ENCODE measurements at regions of chr12 and their contacts with region 1.

Region 1: DNA sequence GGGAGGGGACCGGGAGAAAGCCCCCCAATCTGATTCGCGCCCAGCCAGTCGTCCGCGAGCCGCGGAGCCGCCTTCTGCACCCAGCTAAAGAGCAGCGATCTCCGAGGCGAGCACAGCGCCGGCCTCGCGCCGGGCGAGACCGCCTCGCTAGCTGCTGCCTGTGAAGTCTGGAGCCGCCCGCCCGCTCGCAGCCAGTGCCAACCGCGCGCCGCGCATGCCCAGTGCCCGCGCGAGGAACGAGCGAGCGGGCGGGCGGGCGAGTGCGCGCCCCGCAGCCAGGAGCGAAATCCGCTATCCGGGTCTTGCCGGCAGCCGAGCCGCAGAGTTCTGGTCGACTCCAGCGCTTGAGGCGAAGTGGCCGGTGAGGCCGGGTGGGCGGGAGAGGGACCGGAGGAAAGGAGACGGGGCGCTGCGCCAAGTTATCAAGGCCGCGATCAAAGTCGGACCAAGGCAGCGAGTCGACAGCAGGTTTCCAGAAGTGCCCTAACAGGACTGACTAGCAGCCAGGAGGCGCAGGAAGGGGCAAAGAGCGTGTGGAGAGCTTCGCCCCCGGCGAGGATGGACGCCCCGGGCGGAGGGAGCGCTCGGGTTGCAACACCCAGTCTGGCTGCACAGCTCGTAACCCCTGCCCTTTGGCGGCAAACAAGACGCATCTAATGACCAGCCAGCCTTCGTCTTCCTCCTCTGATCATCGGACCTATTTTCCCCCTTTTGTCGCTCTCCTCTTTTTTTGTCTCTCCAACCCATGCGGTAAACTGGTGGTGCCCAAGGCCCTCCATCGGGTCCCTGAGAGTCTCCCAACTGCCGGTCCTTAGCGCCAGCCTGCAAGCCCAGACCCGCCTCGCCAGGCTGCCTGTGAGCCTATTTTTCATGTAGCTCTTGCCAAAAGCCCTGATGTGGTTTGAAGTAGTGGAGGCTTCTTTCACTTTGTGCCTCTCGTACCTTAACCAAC is at the start of gene EPS8:
- DNase-seq: peak; percentile 91
- ATAC-seq: peak; percentile 91
- H3K4me3 ChIP-seq: peak within 1 kb of the TSS; percentile 72
- H3K27ac ChIP-seq: peak within 1 kb of the TSS; percentile 96
- H3K4me1 ChIP-seq: peaks cover 2% of the 10 kb centered on the region; the same call in 1 of the 2 replicates
- H3K27me3 ChIP-seq: no peaks in the 10 kb centered on the region
- CTCF ChIP-seq: no peak
- POLR2A ChIP-seq: peak; percentile 86
- RAD21 ChIP-seq: peak; percentile 28; the same call in 1 of the 2 replicates
- total RNA-seq, gene EPS8: 102 and 104 TPM in 2 replicates

Region 2: GRCh38 chr12:15532364-15532977 is 257.0 kb before region 1 on chr12:
- CTCF ChIA-PET with region 1: no interaction called
- POLR2A ChIA-PET with region 1: interaction called, 3 read pairs
- dilution Hi-C with region 1: no loop called
- in situ Hi-C with region 1: no loop called
- intact Hi-C with region 1: loop called (anchors 10 kb)
- DNase-seq: peak; percentile 77
- ATAC-seq: peak; percentile 86
- H3K4me3 ChIP-seq: no peak overlapping the region
- H3K27ac ChIP-seq: no peak overlapping the region
- H3K4me1 ChIP-seq: peaks cover 5% of the 10 kb centered on the region; the same call in 1 of the 2 replicates
- H3K27me3 ChIP-seq: no peaks in the 10 kb centered on the region
- CTCF ChIP-seq: peak; percentile 80
- POLR2A ChIP-seq: no peak
- RAD21 ChIP-seq: peak; percentile 84

Region 3: DNA sequence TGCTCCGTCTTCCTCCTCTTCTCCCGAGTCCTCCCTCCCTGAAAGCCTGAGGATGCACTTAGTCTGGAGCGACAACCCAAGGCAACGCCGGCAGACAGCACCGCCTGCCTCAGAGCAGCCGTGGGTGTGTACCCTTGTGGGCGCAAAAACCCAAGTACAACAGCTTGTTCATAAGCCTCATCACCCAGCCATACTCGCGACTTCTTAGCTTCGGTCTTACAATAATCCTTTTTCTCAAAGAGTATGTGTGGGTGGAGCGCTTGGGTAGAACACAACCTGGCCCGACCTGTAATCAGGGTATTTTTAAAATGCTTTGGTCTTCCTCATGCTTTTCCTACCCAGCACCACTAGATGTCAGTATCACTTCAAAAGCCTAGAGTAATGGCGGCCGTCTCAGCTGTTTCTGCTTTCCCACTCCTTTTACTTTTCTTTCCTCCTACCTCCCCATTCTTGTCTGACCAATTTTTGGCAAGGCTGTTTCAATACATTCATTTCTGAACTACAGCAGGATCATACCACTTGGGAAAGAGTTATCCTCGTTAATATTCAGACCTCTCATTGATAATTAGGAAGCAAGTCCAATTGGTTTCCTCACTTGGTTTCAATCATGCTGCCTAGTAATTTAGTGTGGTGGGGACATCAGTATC is 199.2 kb before region 1 on chr12:
- CTCF ChIA-PET with region 1: no interaction called
- POLR2A ChIA-PET with region 1: no interaction called
- dilution Hi-C with region 1: no loop called
- in situ Hi-C with region 1: no loop called
- intact Hi-C with region 1: loop called (anchors 1 kb)
- DNase-seq: peak; percentile 70
- ATAC-seq: peak; percentile 97
- H3K4me3 ChIP-seq: peak overlapping the region; percentile 37
- H3K27ac ChIP-seq: no peak overlapping the region
- H3K4me1 ChIP-seq: no peaks in the 10 kb centered on the region
- H3K27me3 ChIP-seq: peaks cover 2% of the 10 kb centered on the region; the same call in 1 of the 2 replicates
- CTCF ChIP-seq: peak; percentile 92
- POLR2A ChIP-seq: no peak
- RAD21 ChIP-seq: peak; percentile 97

Region 4: GRCh38 chr12:15629108-15629507 is 160.4 kb before region 1 on chr12:
- CTCF ChIA-PET with region 1: no interaction called
- POLR2A ChIA-PET with region 1: no interaction called
- dilution Hi-C with region 1: no loop called
- in situ Hi-C with region 1: no loop called
- intact Hi-C with region 1: loop called (anchors 2 kb)
- DNase-seq: peak; percentile 98
- ATAC-seq: peak; percentile 95
- H3K4me3 ChIP-seq: no peak overlapping the region; the same call in 1 of the 2 replicates
- H3K27ac ChIP-seq: peak overlapping the region; percentile 96
- H3K4me1 ChIP-seq: peaks cover 15% of the 10 kb centered on the region
- H3K27me3 ChIP-seq: no peaks in the 10 kb centered on the region
- CTCF ChIP-seq: no peak
- POLR2A ChIP-seq: peak; percentile 41; the same call in 1 of the 2 replicates
- RAD21 ChIP-seq: no peak

Region 5: GRCh38 chr12:15644700-15645099 is 144.8 kb before region 1 on chr12:
- CTCF ChIA-PET with region 1: no interaction called
- POLR2A ChIA-PET with region 1: no interaction called
- dilution Hi-C with region 1: no loop called
- in situ Hi-C with region 1: no loop called
- intact Hi-C with region 1: loop called (anchors 5 kb)
- DNase-seq: peak; percentile 48
- ATAC-seq: peak; percentile 60
- H3K4me3 ChIP-seq: no peak overlapping the region
- H3K27ac ChIP-seq: no peak overlapping the region
- H3K4me1 ChIP-seq: peaks cover 6% of the 10 kb centered on the region
- H3K27me3 ChIP-seq: no peaks in the 10 kb centered on the region
- CTCF ChIP-seq: no peak
- POLR2A ChIP-seq: no peak
- RAD21 ChIP-seq: no peak

Region 6: DNA sequence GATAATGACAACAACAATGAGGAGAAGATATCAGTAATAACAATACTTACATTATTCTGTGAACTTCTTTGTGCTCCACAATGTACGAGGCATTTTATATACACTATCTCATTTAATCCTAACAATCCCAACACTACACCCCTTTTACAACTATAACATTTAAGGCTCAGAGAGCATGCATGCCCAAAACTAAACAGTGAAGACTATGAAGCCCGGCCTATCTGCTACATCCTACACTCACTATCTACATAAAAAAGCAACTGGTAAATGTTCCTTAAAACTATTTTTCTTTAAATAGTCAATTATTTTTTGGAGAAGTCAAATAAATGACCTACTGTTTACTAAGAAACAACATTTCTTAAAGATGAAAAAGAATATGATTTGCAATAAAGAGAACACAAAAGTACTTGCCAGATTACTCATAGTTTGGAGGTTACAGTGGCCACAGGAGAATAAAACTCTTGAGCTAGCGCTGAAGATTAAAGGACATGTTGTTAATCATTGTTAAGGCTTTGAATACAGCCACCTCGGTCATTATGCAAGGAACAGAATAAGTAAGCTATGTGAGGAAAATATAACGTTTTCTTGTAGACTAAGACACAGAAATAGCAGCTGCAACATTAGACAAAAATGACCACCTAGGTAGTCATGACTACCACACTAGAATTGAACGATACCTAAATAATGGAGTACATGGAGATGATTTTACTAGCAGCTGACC is 57.0 kb before region 1 on chr12:
- CTCF ChIA-PET with region 1: no interaction called
- POLR2A ChIA-PET with region 1: no interaction called
- dilution Hi-C with region 1: no loop called
- in situ Hi-C with region 1: no loop called
- intact Hi-C with region 1: no loop called
- DNase-seq: no peak
- ATAC-seq: no peak
- H3K4me3 ChIP-seq: no peak overlapping the region
- H3K27ac ChIP-seq: no peak overlapping the region
- H3K4me1 ChIP-seq: peaks cover 5% of the 10 kb centered on the region; the same call in 1 of the 2 replicates
- H3K27me3 ChIP-seq: no peaks in the 10 kb centered on the region
- CTCF ChIP-seq: no peak
- POLR2A ChIP-seq: no peak
- RAD21 ChIP-seq: no peak